ENCODE measurements at regions of chr21 and their contacts with region 1.

Region 1: DNA sequence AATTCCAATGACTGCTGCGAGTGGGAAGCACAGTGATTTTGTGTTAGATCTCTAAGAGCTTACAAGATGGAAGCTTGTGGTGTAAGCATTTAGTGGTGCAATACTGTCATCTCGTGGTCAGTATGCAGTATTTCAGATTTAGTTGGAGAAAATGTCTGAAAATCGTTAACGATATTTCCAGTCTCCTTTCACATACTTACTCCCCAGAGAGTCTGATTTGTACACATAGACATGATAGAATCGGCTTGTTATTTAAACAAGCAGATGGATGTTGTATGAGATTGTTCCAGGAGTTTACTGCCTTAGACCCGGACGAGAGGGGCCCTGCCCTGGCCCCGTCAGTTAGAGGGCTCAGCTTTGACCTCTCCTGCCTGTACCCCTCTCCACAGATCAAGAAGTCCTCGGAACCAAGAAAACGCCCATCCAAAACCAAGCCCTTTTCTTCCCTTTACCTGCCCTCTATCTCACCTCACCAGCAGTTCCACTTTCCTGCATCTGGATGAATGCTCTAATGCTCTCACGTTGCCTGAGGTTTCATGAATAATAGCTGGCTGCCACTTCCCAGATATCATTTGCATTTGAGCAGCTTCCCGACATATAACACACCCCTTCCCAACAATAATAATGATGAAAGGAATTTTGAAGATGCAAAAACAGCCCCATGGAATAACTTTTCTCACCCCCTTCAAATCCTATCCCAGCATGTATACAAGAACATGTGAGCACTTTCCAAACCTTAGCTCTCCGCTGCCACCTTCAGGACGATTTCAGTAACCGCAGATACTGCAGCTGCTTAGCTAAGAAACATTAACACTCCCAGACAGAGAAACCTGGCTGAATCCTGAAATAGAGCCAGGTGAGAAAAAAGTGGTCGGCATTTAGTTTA is 247.3 kb downstream of the LTN1 start:
- DNase-seq: peak; percentile 56 to 58
- ATAC-seq: peak; percentile 92 to 95
- H3K4me3 ChIP-seq: peak overlapping the region; percentile 59 to 63 (median 62)
- H3K27ac ChIP-seq: peak overlapping the region; percentile 71 to 79 (median 76)
- H3K4me1 ChIP-seq: peaks cover 3 to 9% of the 10 kb centered on the region in 2 donors
- H3K27me3 ChIP-seq: no peaks in the 10 kb centered on the region
- CTCF ChIP-seq: peak; percentile 87 to 99 (median 91)
- POLR2A ChIP-seq: no peak

Region 2: GRCh38 chr21:27700974-27701614 is 1044.3 kb before region 1 on chr21:
- in situ Hi-C with region 1: loop called (anchors 10 to 25 kb)
- intact Hi-C with region 1: loop called (anchors 2 kb)
- DNase-seq: peak; percentile 47 to 78
- ATAC-seq: peak; percentile 94 to 97
- H3K4me3 ChIP-seq: peak overlapping the region in 1 of 4 donors; percentile 6
- H3K27ac ChIP-seq: no peak overlapping the region
- H3K4me1 ChIP-seq: peaks cover 0 to 7% of the 10 kb centered on the region in 2 donors
- H3K27me3 ChIP-seq: no peaks in the 10 kb centered on the region
- CTCF ChIP-seq: peak; percentile 83 to 87 (median 86)
- POLR2A ChIP-seq: no peak

Region 3: GRCh38 chr21:28074676-28075075 is 670.7 kb before region 1 on chr21:
- in situ Hi-C with region 1: loop called in 1 of 4 experiments (anchors 25 kb)
- intact Hi-C with region 1: loop called (anchors 10 kb)
- DNase-seq: no peak
- ATAC-seq: no peak
- H3K4me3 ChIP-seq: no peak overlapping the region
- H3K27ac ChIP-seq: no peak overlapping the region
- H3K4me1 ChIP-seq: peaks cover 6 to 25% of the 10 kb centered on the region in 2 donors
- H3K27me3 ChIP-seq: no peaks in the 10 kb centered on the region
- CTCF ChIP-seq: no peak
- POLR2A ChIP-seq: no peak

Region 4: DNA sequence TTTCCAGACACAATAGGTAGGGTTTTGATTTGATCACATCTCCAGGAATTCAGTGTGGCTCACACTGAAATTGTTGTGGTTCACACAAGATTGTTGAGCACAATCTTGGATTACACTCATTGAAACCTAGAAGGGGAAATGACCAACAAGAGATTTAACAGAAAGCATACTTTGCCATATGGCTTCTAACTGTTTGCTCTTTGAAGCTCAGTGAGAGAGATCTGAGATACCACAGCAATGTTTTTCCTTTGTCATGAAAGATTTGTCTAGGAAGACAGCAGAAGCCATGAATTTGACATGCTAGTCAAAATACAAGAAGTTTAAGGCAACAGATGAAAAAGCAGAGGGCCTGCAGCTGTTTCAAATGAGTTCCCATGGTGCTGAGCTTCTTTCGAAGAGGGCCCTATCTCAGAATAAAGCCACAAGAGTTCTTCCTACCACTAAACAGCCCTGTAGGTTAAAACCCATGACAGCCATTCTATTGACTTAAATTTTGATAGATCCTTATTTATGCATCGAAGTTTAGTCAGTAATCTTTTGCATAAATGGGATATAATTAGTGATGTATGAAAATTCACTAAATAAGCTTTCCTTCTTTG is 403.1 kb before region 1 on chr21:
- in situ Hi-C with region 1: loop called in 2 of 4 experiments (anchors 5 to 25 kb)
- intact Hi-C with region 1: loop called (anchors 10 kb)
- DNase-seq: no peak
- ATAC-seq: no peak
- H3K4me3 ChIP-seq: no peak overlapping the region
- H3K27ac ChIP-seq: no peak overlapping the region
- H3K4me1 ChIP-seq: peaks cover 0 to 12% of the 10 kb centered on the region in 2 donors
- H3K27me3 ChIP-seq: no peaks in the 10 kb centered on the region
- CTCF ChIP-seq: no peak
- POLR2A ChIP-seq: no peak

Region 5: GRCh38 chr21:28522014-28522799 is 223.2 kb before region 1 on chr21:
- in situ Hi-C with region 1: loop called (anchors 5 to 10 kb)
- intact Hi-C with region 1: loop called (anchors 1 kb)
- DNase-seq: no peak
- ATAC-seq: peak in 1 of 2 donors; percentile 66
- H3K4me3 ChIP-seq: no peak overlapping the region
- H3K27ac ChIP-seq: peak overlapping the region in 3 of 4 donors; percentile 39 to 55 (median 45)
- H3K4me1 ChIP-seq: peaks cover 2 to 4% of the 10 kb centered on the region in 2 donors
- H3K27me3 ChIP-seq: no peaks in the 10 kb centered on the region
- CTCF ChIP-seq: peak in 1 of 5 experiments; percentile 12
- POLR2A ChIP-seq: no peak

Measured in gastrocnemius medialis (tissue), 4 donors.